Activated CD4-positive, alpha-beta T cell treated with anti-CD3 and anti-CD28 coated beads for 36 hours (primary cell): ENCODE measurements at regions of chr3 and their contacts with region 1.

Region 1: GRCh38 chr3:177144923-177145780 is 52.1 kb downstream of the TBL1XR1 start:
- DNase-seq: no peak
- ATAC-seq: peak; percentile 26
- H3K4me3 Mint-ChIP-seq: peak overlapping the region; percentile 30
- H3K27ac Mint-ChIP-seq: peak overlapping the region; percentile 59
- H3K4me1 Mint-ChIP-seq: peaks cover 77% of the 10 kb centered on the region
- H3K27me3 Mint-ChIP-seq: no peaks in the 10 kb centered on the region

Region 2: GRCh38 chr3:177124882-177125281 is 20.3 kb before region 1 on chr3:
- CTCF ChIA-PET with region 1: interaction called, 4 read pairs
- POLR2A ChIA-PET with region 1: no interaction called
- intact Hi-C with region 1: loop called in 1 of 2 experiments (anchors 2 kb)
- DNase-seq: no peak
- ATAC-seq: peak; percentile 68
- H3K4me3 Mint-ChIP-seq: no peak overlapping the region
- H3K27ac Mint-ChIP-seq: peak overlapping the region; percentile 40
- H3K4me1 Mint-ChIP-seq: peaks cover 81% of the 10 kb centered on the region
- H3K27me3 Mint-ChIP-seq: no peaks in the 10 kb centered on the region

Region 3: DNA sequence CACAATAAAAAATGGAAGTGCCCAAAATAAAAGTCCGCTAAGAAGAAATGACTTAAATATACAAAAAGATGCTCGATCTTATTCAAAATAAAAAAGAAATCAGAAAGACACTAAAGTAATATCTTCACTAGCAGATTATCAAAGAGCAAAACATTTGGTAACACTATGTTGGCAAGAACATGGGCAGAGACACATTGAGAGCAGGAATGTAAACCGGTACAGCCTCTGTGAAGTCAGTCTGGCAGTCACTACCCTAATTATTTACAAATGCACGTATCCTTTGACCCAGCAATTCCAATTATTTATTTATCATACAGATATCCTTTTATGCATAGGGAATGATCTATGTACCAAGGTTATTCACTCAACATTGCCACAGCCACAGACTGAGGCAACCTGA is 17.6 kb after region 1 on chr3:
- CTCF ChIA-PET with region 1: interaction called, 4 read pairs
- POLR2A ChIA-PET with region 1: interaction called, 11 read pairs
- intact Hi-C with region 1: no loop called
- DNase-seq: no peak
- ATAC-seq: no peak
- H3K4me3 Mint-ChIP-seq: no peak overlapping the region
- H3K27ac Mint-ChIP-seq: no peak overlapping the region
- H3K4me1 Mint-ChIP-seq: peaks cover 55% of the 10 kb centered on the region
- H3K27me3 Mint-ChIP-seq: no peaks in the 10 kb centered on the region